Activated naive CD4-positive, alpha-beta T cell treated with anti-CD3 and anti-CD28 coated beads, Interleukin-2, amount 10 ng/mL, durations not matched to agents 7 days and 5 days (primary cell): ENCODE measurements at regions of chr19 and their contacts with region 1.

Region 1: GRCh38 chr19:42450314-42450934 is 7.7 kb upstream of the CXCL17 start:
- DNase-seq: peak; percentile 86
- H3K4me3 Mint-ChIP-seq: no peak overlapping the region
- H3K27ac Mint-ChIP-seq: no peak overlapping the region
- H3K4me1 Mint-ChIP-seq: peaks cover 33% of the 10 kb centered on the region
- H3K27me3 Mint-ChIP-seq: peaks cover 16% of the 10 kb centered on the region

Region 2: DNA sequence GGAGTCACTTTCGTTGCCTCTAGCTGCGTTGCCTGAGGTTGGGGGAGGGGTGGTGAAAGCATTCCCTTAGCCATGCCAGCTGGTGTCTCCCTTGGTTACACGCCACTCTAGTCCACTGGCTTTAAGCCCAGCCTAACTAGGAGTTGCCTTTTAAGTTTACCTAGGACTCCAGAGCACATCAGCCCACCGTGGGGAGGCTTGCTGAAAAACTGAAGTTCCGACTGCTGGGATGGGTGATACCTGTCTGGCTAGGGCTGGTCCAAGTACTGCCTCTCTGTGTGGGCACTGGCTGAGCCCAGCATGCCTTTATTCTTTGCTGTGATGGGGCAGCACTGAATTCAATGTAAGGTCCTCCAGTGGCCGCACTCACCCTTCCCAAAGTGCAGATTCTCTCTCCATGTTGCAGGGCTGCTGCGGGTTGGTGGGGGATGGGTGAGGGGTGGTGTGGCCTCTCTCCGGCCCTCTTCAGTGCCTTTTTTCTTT is 89.7 kb after region 1 on chr19:
- CTCF ChIA-PET with region 1: interaction called, 11 read pairs
- DNase-seq: no peak
- H3K4me3 Mint-ChIP-seq: no peak overlapping the region
- H3K27ac Mint-ChIP-seq: no peak overlapping the region
- H3K4me1 Mint-ChIP-seq: no peaks in the 10 kb centered on the region
- H3K27me3 Mint-ChIP-seq: peaks cover 5% of the 10 kb centered on the region